ENCODE measurements at regions of chr18 and their contacts with region 1.

Region 1: DNA sequence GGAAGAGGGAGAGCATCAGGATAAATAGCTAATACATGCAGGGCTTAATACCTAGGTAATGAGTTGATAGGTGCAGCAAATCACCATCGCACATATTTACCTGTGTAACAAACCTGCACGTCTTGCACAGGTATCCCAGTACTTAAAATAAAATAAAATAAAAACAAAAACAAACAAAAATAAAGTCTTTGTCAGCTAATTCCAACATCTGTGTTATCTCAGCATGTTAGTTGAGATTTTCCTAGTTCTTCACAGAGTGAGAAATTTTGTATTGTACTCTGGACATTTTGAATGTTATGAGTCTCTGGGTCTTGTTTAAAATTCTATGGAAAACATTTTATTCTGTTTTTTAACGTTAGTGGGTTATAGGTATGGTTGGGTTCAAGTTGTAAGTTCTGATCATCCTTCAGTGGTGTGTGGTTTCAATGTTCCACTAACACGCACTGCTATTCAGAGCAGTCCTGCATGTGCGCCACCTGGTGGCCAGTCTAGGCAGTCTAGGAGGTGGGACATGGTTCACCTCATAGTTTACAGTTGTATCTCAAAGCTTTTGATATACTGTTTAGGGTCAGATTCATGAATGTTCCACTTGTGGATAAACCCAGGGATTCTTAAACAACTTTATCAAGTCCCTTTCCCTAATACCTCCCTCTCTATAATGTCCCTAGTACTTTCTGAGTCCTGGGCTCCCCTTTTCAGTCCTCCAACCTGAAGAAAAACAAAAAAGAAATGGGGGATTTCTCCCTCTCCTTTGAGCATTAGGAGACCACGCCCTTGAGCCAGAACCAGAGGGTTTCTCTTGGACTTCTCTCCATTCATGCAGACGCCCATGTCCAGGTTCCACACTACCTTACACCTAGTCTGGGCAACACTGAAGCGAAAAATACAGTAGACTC is 213.4 kb upstream of the GATA6 start:
- DNase-seq: peak; percentile 49 to 94 (median 75)
- ATAC-seq: peak; percentile 98
- H3K4me3 ChIP-seq: no peak overlapping the region
- H3K27ac ChIP-seq: no peak overlapping the region
- H3K4me1 ChIP-seq: no peaks in the 10 kb centered on the region
- H3K27me3 ChIP-seq: no peaks in the 10 kb centered on the region
- CTCF ChIP-seq: peak; percentile 85 to 89

Region 2: DNA sequence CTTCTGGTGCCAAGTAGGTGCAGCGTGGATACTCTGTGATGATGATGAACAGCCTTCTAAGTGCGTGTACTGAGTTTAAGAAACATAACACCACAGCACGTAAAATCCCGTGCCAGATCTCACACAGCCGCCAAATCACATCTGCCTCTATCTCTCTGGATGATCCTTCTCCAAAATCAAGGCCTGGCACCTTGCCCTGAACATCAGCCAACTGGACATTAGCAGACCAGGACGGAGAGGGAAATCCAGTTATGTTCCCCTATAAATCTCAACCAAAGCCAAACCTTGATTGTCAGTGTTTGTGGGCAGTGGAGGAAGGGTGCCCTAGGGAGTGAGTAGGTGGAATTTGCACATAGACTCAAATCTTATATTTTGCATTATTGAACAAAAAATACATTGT is 51.1 kb before region 1 on chr18:
- intact Hi-C with region 1: loop called in 1 of 2 experiments (anchors 10 kb)
- DNase-seq: peak in 1 of 4 donors; percentile 48
- ATAC-seq: no peak
- H3K4me3 ChIP-seq: no peak overlapping the region
- H3K27ac ChIP-seq: no peak overlapping the region
- H3K4me1 ChIP-seq: no peaks in the 10 kb centered on the region
- H3K27me3 ChIP-seq: no peaks in the 10 kb centered on the region
- CTCF ChIP-seq: no peak

Region 3: GRCh38 chr18:22108674-22109073 is 152.7 kb after region 1 on chr18:
- intact Hi-C with region 1: no loop called
- DNase-seq: no peak
- ATAC-seq: no peak
- H3K4me3 ChIP-seq: no peak overlapping the region
- H3K27ac ChIP-seq: no peak overlapping the region
- H3K4me1 ChIP-seq: no peaks in the 10 kb centered on the region
- H3K27me3 ChIP-seq: no peaks in the 10 kb centered on the region
- CTCF ChIP-seq: no peak